Natural killer cell (primary cell): ENCODE measurements at regions of chr10 and their contacts with region 1.

Region 1: GRCh38 chr10:24642622-24643417 is 80.9 kb downstream of the ARHGAP21 start:
- DNase-seq: peak in 1 of 2 donors; percentile 76
- ATAC-seq: peak; percentile 77 to 88 (median 78)
- H3K4me3 ChIP-seq: no peak overlapping the region
- H3K4me3 Mint-ChIP-seq: no peak overlapping the region
- H3K27ac ChIP-seq: no peak overlapping the region
- H3K27ac Mint-ChIP-seq: no peak overlapping the region
- H3K4me1 ChIP-seq: no peaks in the 10 kb centered on the region
- H3K4me1 Mint-ChIP-seq: no peaks in the 10 kb centered on the region
- H3K27me3 ChIP-seq: no peaks in the 10 kb centered on the region
- H3K27me3 Mint-ChIP-seq: no peaks in the 10 kb centered on the region
- CTCF ChIP-seq: peak; percentile 87

Region 2: DNA sequence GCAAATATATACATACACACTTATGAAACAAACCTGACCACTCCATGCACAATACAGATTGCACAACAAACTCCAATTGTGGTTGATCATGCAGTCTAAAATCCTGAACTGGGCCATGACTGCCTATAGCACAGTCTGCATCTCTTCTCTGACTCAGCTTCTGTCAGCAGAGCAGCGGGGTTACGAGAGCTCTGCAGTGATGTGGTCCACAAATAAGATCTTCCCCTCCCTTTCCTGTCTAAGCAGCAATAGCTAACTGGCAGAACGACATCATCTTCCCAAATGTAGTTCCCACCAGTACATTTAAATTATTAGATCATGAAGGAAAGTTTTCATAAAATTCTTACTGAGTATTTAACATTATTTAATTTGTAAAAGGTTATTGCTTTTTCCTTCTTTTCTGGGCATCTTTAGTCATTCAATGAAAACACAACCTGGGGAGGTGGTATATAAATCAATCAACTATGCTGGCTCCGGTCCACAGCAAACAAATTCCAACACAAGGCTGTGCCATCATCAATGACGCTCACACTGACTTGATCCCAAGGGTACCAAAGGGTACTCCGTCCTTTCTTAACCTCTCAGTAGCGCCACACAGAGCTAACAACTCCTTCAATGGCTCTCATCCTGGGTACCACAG is 63.8 kb after region 1 on chr10:
- intact Hi-C with region 1: no loop called
- DNase-seq: peak in 1 of 2 donors; percentile 51
- ATAC-seq: peak; percentile 74 to 77 (median 76)
- H3K4me3 ChIP-seq: no peak overlapping the region
- H3K4me3 Mint-ChIP-seq: no peak overlapping the region
- H3K27ac ChIP-seq: no peak overlapping the region
- H3K27ac Mint-ChIP-seq: no peak overlapping the region
- H3K4me1 ChIP-seq: no peaks in the 10 kb centered on the region
- H3K4me1 Mint-ChIP-seq: peaks cover 2 to 16% of the 10 kb centered on the region in 2 donors
- H3K27me3 ChIP-seq: no peaks in the 10 kb centered on the region
- H3K27me3 Mint-ChIP-seq: no peaks in the 10 kb centered on the region
- CTCF ChIP-seq: no peak

Region 3: GRCh38 chr10:24952707-24953645 is 310.2 kb after region 1 on chr10:
- intact Hi-C with region 1: loop called (anchors 1 kb)
- DNase-seq: peak; percentile 53 to 75
- ATAC-seq: peak; percentile 74 to 86 (median 85)
- H3K4me3 ChIP-seq: peak overlapping the region; percentile 75
- H3K4me3 Mint-ChIP-seq: peak overlapping the region; percentile 86
- H3K27ac ChIP-seq: no peak overlapping the region
- H3K27ac Mint-ChIP-seq: peak overlapping the region in 1 of 2 donors; percentile 6
- H3K4me1 ChIP-seq: peaks cover 14% of the 10 kb centered on the region
- H3K4me1 Mint-ChIP-seq: peaks cover 6 to 9% of the 10 kb centered on the region in 2 donors
- H3K27me3 ChIP-seq: no peaks in the 10 kb centered on the region
- H3K27me3 Mint-ChIP-seq: no peaks in the 10 kb centered on the region
- CTCF ChIP-seq: peak; percentile 33

Region 4: DNA sequence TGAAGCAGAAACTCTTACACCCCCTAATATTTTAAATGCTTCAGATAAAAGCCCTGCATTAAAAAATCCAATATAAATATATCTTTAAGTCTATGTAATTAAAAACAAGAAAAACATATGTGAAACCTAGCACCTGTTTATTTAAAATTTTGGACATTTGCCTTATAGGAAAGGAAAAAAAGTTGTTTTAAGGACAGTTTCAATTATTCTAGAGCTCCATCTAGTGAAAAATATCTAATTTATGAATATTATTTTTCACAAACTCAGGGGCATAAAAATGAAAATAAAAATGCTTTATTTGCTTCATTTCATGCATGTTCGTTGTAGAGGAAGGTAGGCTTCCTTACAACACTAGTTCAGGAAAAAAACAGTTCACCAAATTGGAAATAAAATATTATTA is 347.0 kb after region 1 on chr10:
- intact Hi-C with region 1: loop called (anchors 1 kb)
- DNase-seq: no peak
- ATAC-seq: no peak
- H3K4me3 ChIP-seq: no peak overlapping the region
- H3K4me3 Mint-ChIP-seq: no peak overlapping the region
- H3K27ac ChIP-seq: no peak overlapping the region
- H3K27ac Mint-ChIP-seq: no peak overlapping the region
- H3K4me1 ChIP-seq: no peaks in the 10 kb centered on the region
- H3K4me1 Mint-ChIP-seq: no peaks in the 10 kb centered on the region
- H3K27me3 ChIP-seq: no peaks in the 10 kb centered on the region
- H3K27me3 Mint-ChIP-seq: no peaks in the 10 kb centered on the region
- CTCF ChIP-seq: no peak

Region 5: DNA sequence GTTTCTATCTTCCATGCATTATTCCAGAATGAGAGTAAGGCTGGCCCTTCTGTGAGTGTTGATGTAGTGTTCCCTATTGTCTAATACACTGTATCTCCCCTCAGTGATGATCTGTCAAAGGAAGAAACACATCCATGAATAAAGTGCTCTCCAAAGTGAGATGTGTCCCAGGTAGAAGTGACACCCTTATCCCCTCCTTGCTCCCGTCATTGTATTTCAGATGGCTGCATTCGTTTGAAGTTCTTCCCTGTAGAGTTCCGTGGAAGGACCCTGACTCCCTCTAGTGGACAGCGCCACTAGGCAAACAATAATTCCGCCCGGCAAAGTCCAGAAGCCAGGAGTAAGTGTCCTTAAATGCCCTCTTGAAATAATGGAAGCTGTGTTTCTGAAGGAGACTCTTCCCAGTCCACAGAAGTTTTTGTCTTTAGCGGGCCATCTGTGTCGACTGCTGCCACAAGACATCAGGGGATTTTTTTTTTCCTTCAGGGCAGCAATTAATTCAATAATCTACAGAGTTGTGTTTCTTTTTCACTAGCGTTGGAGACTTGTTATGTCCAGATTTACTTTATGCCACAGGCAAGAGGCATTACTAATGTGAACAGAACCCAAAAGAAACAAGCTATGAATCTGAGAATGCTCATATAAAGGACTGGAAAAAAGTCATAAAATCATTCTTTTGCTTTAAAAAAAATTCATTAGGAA is 438.2 kb after region 1 on chr10:
- intact Hi-C with region 1: loop called (anchors 1 kb)
- DNase-seq: peak; percentile 48 to 77
- ATAC-seq: peak; percentile 63 to 85 (median 69)
- H3K4me3 ChIP-seq: no peak overlapping the region
- H3K4me3 Mint-ChIP-seq: no peak overlapping the region
- H3K27ac ChIP-seq: no peak overlapping the region
- H3K27ac Mint-ChIP-seq: no peak overlapping the region
- H3K4me1 ChIP-seq: no peaks in the 10 kb centered on the region
- H3K4me1 Mint-ChIP-seq: peaks cover 5 to 10% of the 10 kb centered on the region in 2 donors
- H3K27me3 ChIP-seq: no peaks in the 10 kb centered on the region
- H3K27me3 Mint-ChIP-seq: peaks cover 10 to 12% of the 10 kb centered on the region in 2 donors
- CTCF ChIP-seq: peak; percentile 78